Thyroid gland (tissue), 4 donors: ENCODE measurements at regions of chr16 and their contacts with region 1.

Region 1: GRCh38 chr16:56532714-56533113 is 12.9 kb upstream of the BBS2 start:
- DNase-seq: no peak
- H3K4me3 ChIP-seq: no peak overlapping the region
- H3K27ac ChIP-seq: no peak overlapping the region
- H3K4me1 ChIP-seq: no peaks in the 10 kb centered on the region
- H3K27me3 ChIP-seq: no peaks in the 10 kb centered on the region
- CTCF ChIP-seq: no peak
- POLR2A ChIP-seq: no peak

Region 2: GRCh38 chr16:56262148-56262547 is 270.6 kb before region 1 on chr16:
- intact Hi-C with region 1: no loop called
- DNase-seq: no peak
- H3K4me3 ChIP-seq: no peak overlapping the region
- H3K27ac ChIP-seq: no peak overlapping the region
- H3K4me1 ChIP-seq: peaks cover 9 to 11% of the 10 kb centered on the region in 2 donors
- H3K27me3 ChIP-seq: no peaks in the 10 kb centered on the region
- CTCF ChIP-seq: no peak
- POLR2A ChIP-seq: no peak

Region 3: GRCh38 chr16:56589141-56590039 is 56.7 kb after region 1 on chr16 and contains the start of gene MT3:
- intact Hi-C with region 1: loop called (anchors 10 kb)
- DNase-seq: peak; percentile 9 to 12
- H3K4me3 ChIP-seq: peak within 1 kb of the TSS in 2 of 3 donors; percentile 8 to 12
- H3K27ac ChIP-seq: no peak within 1 kb of the TSS
- H3K4me1 ChIP-seq: peaks cover 0 to 8% of the 10 kb centered on the region in 2 donors
- H3K27me3 ChIP-seq: no peaks in the 10 kb centered on the region
- CTCF ChIP-seq: no peak
- POLR2A ChIP-seq: no peak
- total RNA-seq, gene MT3: not detected